ENCODE measurements at regions of chr17 and their contacts with region 1.

Region 1: DNA sequence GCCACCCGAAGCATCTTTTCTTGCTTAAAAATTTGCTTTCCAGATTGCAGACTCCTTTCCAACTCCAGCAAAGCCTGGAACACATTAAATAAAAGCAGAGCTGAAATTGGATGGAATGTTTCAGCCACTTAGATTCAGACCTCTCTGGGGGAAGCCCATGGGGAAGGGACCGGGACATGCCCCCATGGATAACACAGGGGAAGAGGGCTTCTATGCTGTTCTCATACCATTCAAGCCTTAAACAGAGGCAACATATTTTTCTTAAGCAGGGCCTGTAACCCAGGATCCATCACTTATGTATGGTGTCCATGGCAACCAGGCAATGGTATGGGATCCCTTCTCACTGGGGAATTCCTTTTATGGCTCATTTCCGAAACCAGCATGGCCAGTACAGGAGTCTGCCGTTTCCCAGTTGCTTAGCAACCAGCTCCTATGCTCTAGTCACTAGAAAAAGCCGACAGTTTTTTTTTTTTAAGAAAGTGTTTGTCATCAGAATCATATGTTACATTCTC is 62.0 kb upstream of the MARCHF10 start:
- DNase-seq: no peak
- H3K4me3 ChIP-seq: no peak overlapping the region
- H3K27ac ChIP-seq: no peak overlapping the region
- H3K4me1 ChIP-seq: peaks cover 0 to 7% of the 10 kb centered on the region in 2 donors
- H3K27me3 ChIP-seq: no peaks in the 10 kb centered on the region
- CTCF ChIP-seq: no peak

Region 2: GRCh38 chr17:62780315-62780714 is 89.8 kb before region 1 on chr17:
- intact Hi-C with region 1: loop called (anchors 5 kb)
- DNase-seq: no peak
- H3K4me3 ChIP-seq: peak overlapping the region in 1 of 2 donors; percentile 46
- H3K27ac ChIP-seq: peak overlapping the region; percentile 70 to 71
- H3K4me1 ChIP-seq: peaks cover 0 to 8% of the 10 kb centered on the region in 2 donors
- H3K27me3 ChIP-seq: no peaks in the 10 kb centered on the region
- CTCF ChIP-seq: peak in 1 of 3 experiments; percentile 15

Region 3: GRCh38 chr17:62808196-62808930 is 61.7 kb before region 1 on chr17 and contains the start of gene MARCHF10:
- intact Hi-C with region 1: no loop called
- DNase-seq: no peak
- H3K4me3 ChIP-seq: peak within 1 kb of the TSS; percentile 48 to 61
- H3K27ac ChIP-seq: no peak within 1 kb of the TSS
- H3K4me1 ChIP-seq: peaks cover 0 to 7% of the 10 kb centered on the region in 2 donors
- H3K27me3 ChIP-seq: no peaks in the 10 kb centered on the region
- CTCF ChIP-seq: no peak
- total RNA-seq, gene MARCHF10: not detected

Region 4: DNA sequence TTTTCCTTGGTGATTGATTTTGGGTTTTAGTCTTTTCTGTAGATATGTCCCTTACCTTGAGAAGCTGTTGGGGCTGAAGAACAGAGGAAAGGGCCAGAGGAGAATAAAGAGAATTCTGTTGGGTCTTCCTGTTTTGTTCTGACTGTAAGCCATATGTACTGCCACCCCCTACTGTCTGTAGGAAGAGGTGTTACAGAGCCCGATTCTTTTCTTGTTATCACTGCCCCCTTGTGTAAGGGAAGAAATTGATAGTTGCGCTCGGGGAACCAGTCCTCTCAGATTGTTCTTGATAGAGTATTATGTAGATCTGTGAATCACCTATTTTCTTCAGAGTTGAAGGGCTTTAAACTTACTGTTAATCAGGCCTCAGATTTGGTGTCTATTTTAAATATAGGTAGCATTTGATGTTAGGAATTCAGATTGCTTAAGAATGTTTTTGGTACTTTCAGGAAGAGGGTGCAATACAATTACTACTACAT is 98.4 kb after region 1 on chr17:
- intact Hi-C with region 1: loop called (anchors 5 kb)
- DNase-seq: peak in 1 of 2 donors; percentile 70
- H3K4me3 ChIP-seq: no peak overlapping the region
- H3K27ac ChIP-seq: no peak overlapping the region
- H3K4me1 ChIP-seq: peaks cover 0 to 7% of the 10 kb centered on the region in 2 donors
- H3K27me3 ChIP-seq: no peaks in the 10 kb centered on the region
- CTCF ChIP-seq: peak; percentile 68 to 80 (median 74)

Measured in ascending aorta (tissue), 2 donors.